ENCODE measurements at regions of chr13 and their contacts with region 1.

Region 1: DNA sequence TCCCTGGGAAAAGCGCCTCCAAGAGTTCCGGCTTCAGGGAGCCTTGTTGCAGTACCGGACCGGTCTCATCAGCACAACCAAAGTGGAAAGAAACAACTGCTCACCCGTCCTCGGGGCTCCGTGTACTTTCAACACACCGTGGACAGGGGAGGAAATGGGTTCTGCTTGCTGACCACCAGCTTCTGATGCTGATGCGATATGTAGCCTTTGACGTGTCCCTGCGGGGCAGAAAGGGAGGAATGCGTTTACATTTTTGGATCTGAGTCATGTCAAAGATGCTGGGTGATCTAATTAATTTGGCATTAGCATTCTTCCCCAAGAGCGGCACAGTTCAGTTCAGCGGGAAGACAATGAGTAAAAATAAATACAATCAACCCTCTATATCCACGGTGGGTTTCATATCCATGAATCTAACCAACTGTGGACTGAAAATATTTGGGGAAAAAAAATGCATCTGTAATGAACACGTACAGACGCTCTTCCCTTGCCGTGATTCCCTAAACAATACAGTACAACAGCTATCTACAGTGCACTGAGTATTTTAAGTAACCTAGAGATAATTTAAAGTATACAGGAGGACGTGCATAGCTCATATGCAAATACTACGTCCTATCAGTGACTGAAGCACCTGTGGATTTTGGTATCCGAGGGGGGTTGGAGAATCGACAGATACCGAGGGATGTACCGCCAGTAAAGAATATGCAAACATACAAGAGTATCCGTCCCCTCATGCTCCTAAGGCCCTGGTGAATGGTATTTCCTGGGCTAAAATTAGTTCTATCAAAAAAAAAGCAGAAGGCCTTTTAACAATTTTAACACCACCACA is 19.8 kb downstream of the PROZ start:
- DNase-seq: peak; percentile 99
- ATAC-seq: peak; percentile 90
- H3K4me3 ChIP-seq: peak overlapping the region; percentile 31; the same call in 1 of the 2 replicates
- H3K27ac ChIP-seq: peak overlapping the region; percentile 98
- H3K4me1 ChIP-seq: peaks cover 18% of the 10 kb centered on the region
- H3K27me3 ChIP-seq: no peaks in the 10 kb centered on the region
- CTCF ChIP-seq: no peak
- POLR2A ChIP-seq: peak; percentile 96
- RAD21 ChIP-seq: peak; percentile 38; the same call in 1 of the 2 replicates

Region 2: GRCh38 chr13:112689303-112690165 is 488.7 kb before region 1 on chr13 and contains the start of gene ATP11A:
- CTCF ChIA-PET with region 1: no interaction called
- POLR2A ChIA-PET with region 1: no interaction called
- dilution Hi-C with region 1: no loop called
- in situ Hi-C with region 1: no loop called
- intact Hi-C with region 1: no loop called
- DNase-seq: peak; percentile 91
- ATAC-seq: peak; percentile 96
- H3K4me3 ChIP-seq: peak within 1 kb of the TSS; percentile 72
- H3K27ac ChIP-seq: peak within 1 kb of the TSS; percentile 40
- H3K4me1 ChIP-seq: peaks cover 14% of the 10 kb centered on the region
- H3K27me3 ChIP-seq: no peaks in the 10 kb centered on the region
- CTCF ChIP-seq: no peak
- POLR2A ChIP-seq: peak; percentile 92
- RAD21 ChIP-seq: peak; percentile 28; the same call in 1 of the 2 replicates
- total RNA-seq, gene ATP11A: 8.4 and 8.9 TPM in 2 replicates

Region 3: GRCh38 chr13:113216254-113217048 is 38.2 kb after region 1 on chr13:
- CTCF ChIA-PET with region 1: no interaction called
- POLR2A ChIA-PET with region 1: no interaction called
- dilution Hi-C with region 1: no loop called
- in situ Hi-C with region 1: no loop called
- intact Hi-C with region 1: loop called (anchors 2 kb)
- DNase-seq: peak; percentile 74
- ATAC-seq: peak; percentile 74
- H3K4me3 ChIP-seq: no peak overlapping the region
- H3K27ac ChIP-seq: peak overlapping the region; percentile 0; the same call in 1 of the 2 replicates
- H3K4me1 ChIP-seq: peaks cover 30% of the 10 kb centered on the region
- H3K27me3 ChIP-seq: no peaks in the 10 kb centered on the region
- CTCF ChIP-seq: no peak
- POLR2A ChIP-seq: no peak
- RAD21 ChIP-seq: no peak